ENCODE measurements at regions of chr14 and their contacts with region 1.

Region 1: GRCh38 chr14:77862154-77862786 is 62.4 kb downstream of the ADCK1 start:
- DNase-seq: peak; percentile 76 to 79 (median 78)
- ATAC-seq: peak; percentile 85
- H3K4me3 ChIP-seq: no peak overlapping the region
- H3K27ac ChIP-seq: no peak overlapping the region
- H3K4me1 ChIP-seq: peaks cover 43 to 55% of the 10 kb centered on the region in 2 experiments
- H3K27me3 ChIP-seq: no peaks in the 10 kb centered on the region
- CTCF ChIP-seq: peak; percentile 75 to 91 (median 83)
- EP300 ChIP-seq: no peak
- POLR2A ChIP-seq: no peak
- RAD21 ChIP-seq: peak; percentile 86 to 91

Region 2: DNA sequence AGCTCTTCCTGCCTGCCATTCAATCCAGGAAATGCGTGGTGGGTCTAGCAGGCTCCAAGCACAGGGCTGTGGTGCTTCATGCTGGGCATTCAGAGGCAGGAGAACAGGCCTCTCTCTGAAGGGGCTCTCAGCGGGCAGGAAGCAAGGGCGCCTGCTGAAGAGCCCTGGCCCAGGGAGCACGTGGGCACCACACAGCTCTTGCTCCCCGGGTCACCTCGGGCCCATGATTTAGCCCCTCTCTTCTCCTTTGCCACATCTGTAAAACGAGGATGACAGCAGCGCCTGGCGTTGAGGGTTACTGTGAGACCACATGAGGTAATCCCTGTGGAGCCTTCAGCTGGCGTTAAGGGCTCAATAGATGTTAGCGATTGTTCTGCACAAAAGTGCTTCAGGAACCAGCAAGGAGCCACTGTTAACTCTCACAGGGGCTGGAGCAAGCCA is 208.2 kb before region 1 on chr14:
- CTCF ChIA-PET with region 1: no interaction called
- POLR2A ChIA-PET with region 1: no interaction called
- in situ Hi-C with region 1: no loop called
- intact Hi-C with region 1: loop called (anchors 2 kb)
- DNase-seq: no peak
- ATAC-seq: no peak; the same call in 2 of the 3 replicates
- H3K4me3 ChIP-seq: no peak overlapping the region
- H3K27ac ChIP-seq: no peak overlapping the region
- H3K4me1 ChIP-seq: peaks cover 0 to 4% of the 10 kb centered on the region in 2 experiments; a peak in 4 of 5 replicates
- H3K27me3 ChIP-seq: no peaks in the 10 kb centered on the region
- CTCF ChIP-seq: no peak
- EP300 ChIP-seq: no peak
- POLR2A ChIP-seq: no peak
- RAD21 ChIP-seq: no peak

Region 3: GRCh38 chr14:77923131-77923936 is 61.1 kb after region 1 on chr14:
- CTCF ChIA-PET with region 1: no interaction called
- POLR2A ChIA-PET with region 1: no interaction called
- in situ Hi-C with region 1: no loop called
- intact Hi-C with region 1: loop called (anchors 2 kb)
- DNase-seq: peak; percentile 40 to 88 (median 62)
- ATAC-seq: peak; percentile 91
- H3K4me3 ChIP-seq: no peak overlapping the region
- H3K27ac ChIP-seq: peak overlapping the region; percentile 92
- H3K4me1 ChIP-seq: peaks cover 46 to 47% of the 10 kb centered on the region in 2 experiments
- H3K27me3 ChIP-seq: no peaks in the 10 kb centered on the region
- CTCF ChIP-seq: no peak; a peak in 1 of 6 replicates
- EP300 ChIP-seq: peak; percentile 79
- POLR2A ChIP-seq: no peak
- RAD21 ChIP-seq: no peak

Region 4: GRCh38 chr14:77979666-77980351 is 117.5 kb after region 1 on chr14:
- CTCF ChIA-PET with region 1: no interaction called
- POLR2A ChIA-PET with region 1: no interaction called
- in situ Hi-C with region 1: no loop called
- intact Hi-C with region 1: loop called (anchors 1 kb)
- DNase-seq: peak; percentile 40 to 61 (median 52)
- ATAC-seq: peak; percentile 96
- H3K4me3 ChIP-seq: no peak overlapping the region
- H3K27ac ChIP-seq: no peak overlapping the region
- H3K4me1 ChIP-seq: peaks cover 0 to 8% of the 10 kb centered on the region in 2 experiments; a peak in 1 of 5 replicates
- H3K27me3 ChIP-seq: no peaks in the 10 kb centered on the region
- CTCF ChIP-seq: peak; percentile 65 to 98 (median 80)
- EP300 ChIP-seq: no peak
- POLR2A ChIP-seq: no peak
- RAD21 ChIP-seq: peak in 1 of 2 experiments; percentile 56; a peak in 3 of 4 replicates

Region 5: DNA sequence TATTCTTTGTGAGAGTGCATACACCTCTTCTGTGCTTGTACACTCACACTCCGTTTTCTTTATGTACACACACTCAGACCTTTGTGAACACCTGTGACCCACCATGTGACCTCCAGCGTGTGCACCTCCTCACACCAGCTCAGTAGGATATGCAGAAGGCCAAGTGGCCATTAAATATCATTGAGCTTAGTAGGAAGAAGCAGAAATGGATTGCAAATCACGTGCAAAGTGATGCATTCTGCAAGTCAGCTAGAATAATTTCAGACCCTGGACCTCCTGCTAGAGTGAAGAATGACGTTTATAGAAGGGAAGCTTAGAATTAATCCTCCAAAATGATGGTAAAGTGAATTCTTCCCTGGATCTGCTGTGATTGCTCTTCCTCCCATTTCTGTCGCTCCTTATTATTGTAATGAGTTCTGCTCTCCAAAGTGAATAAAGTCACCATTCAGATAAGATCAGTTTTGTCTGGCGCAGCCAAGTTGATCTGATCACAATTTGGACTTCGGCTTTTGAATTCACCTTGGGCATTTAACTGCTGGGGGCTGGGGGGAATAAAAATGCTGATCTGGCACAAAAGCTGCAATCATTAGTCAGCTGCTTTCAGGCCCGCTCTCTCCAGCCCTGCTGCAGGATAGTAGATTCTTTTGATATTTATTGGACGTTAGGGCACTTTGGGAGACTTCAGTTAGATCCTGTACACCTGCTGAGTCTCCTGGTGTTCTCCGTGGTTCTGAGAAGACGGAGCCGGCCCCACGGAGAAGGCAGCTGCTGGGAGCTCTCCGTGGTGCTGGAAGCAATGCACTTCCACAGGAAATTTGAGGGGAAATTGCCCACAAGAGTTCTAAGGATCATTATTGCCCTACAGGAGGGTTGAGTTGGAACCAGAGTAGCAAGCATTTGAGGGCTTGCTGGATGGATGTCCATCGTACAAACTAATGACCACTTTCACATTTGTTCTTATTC is 295.5 kb after region 1 on chr14:
- CTCF ChIA-PET with region 1: no interaction called
- POLR2A ChIA-PET with region 1: no interaction called
- in situ Hi-C with region 1: no loop called
- intact Hi-C with region 1: loop called (anchors 10 kb)
- DNase-seq: peak; percentile 12 to 16 (median 14)
- ATAC-seq: no peak
- H3K4me3 ChIP-seq: no peak overlapping the region
- H3K27ac ChIP-seq: no peak overlapping the region
- H3K4me1 ChIP-seq: no peaks in the 10 kb centered on the region; a peak in 1 of 5 replicates
- H3K27me3 ChIP-seq: no peaks in the 10 kb centered on the region
- CTCF ChIP-seq: no peak
- EP300 ChIP-seq: no peak
- POLR2A ChIP-seq: no peak
- RAD21 ChIP-seq: no peak

Measured in K562 (cell line).